ENCODE measurements at regions of chr15 and their contacts with region 1.

Region 1: GRCh38 chr15:48861813-48862431 is 16.0 kb upstream of the EID1 start:
- DNase-seq: peak; percentile 74
- H3K4me3 Mint-ChIP-seq: no peak overlapping the region
- H3K27ac Mint-ChIP-seq: no peak overlapping the region
- H3K4me1 Mint-ChIP-seq: peaks cover 14% of the 10 kb centered on the region
- H3K27me3 Mint-ChIP-seq: peaks cover 11% of the 10 kb centered on the region

Region 2: GRCh38 chr15:48875241-48875960 is 13.5 kb after region 1 on chr15:
- CTCF ChIA-PET with region 1: interaction called, 11 read pairs
- POLR2A ChIA-PET with region 1: no interaction called
- DNase-seq: no peak
- H3K4me3 Mint-ChIP-seq: no peak overlapping the region
- H3K27ac Mint-ChIP-seq: no peak overlapping the region
- H3K4me1 Mint-ChIP-seq: peaks cover 34% of the 10 kb centered on the region
- H3K27me3 Mint-ChIP-seq: peaks cover 36% of the 10 kb centered on the region

Region 3: DNA sequence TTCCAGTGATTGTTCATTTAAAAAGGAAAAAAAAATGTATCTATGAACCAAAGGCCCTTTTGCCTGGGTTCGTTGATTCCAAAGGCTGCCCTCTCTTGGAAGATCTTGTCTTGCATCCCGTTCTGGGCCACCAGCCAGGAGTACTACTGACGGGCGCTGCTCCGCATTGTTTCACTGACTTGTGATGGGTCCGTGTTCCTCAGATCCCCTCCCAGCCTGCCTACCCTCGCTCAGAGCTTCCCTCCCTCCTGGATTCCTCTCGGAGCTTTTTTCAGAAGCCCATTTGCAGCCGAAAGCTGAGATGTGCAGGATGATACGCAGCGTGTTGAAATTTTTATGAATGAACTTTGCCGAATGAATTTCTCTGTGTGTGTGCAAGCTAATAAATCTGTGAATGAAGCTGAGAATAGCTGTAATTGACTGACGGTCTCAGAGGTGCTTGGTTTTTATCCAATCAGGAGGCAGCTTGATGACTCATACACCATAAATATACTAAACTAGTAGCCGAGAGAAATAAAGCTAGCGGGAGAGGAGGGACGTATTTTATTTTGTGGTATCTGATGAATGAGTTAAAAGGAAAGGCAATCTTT is 101.7 kb after region 1 on chr15 and contains the start of gene SHC4:
- CTCF ChIA-PET with region 1: interaction called, 10 read pairs
- POLR2A ChIA-PET with region 1: no interaction called
- DNase-seq: peak; percentile 30
- H3K4me3 Mint-ChIP-seq: peak within 1 kb of the TSS; percentile 63
- H3K27ac Mint-ChIP-seq: peak within 1 kb of the TSS; percentile 48
- H3K4me1 Mint-ChIP-seq: peaks cover 45% of the 10 kb centered on the region
- H3K27me3 Mint-ChIP-seq: peaks cover 43% of the 10 kb centered on the region
- total RNA-seq, gene SHC4: 0.30 to 0.46 TPM

Region 4: GRCh38 chr15:48975472-48976419 is 113.8 kb after region 1 on chr15:
- CTCF ChIA-PET with region 1: interaction called, 27 read pairs
- POLR2A ChIA-PET with region 1: interaction called, 3 read pairs
- DNase-seq: peak; percentile 72
- H3K4me3 Mint-ChIP-seq: peak overlapping the region; percentile 47
- H3K27ac Mint-ChIP-seq: no peak overlapping the region
- H3K4me1 Mint-ChIP-seq: peaks cover 3% of the 10 kb centered on the region
- H3K27me3 Mint-ChIP-seq: peaks cover 7% of the 10 kb centered on the region

Region 5: GRCh38 chr15:49145651-49146609 is 284.0 kb after region 1 on chr15:
- CTCF ChIA-PET with region 1: interaction called, 11 read pairs
- POLR2A ChIA-PET with region 1: no interaction called
- DNase-seq: peak; percentile 58
- H3K4me3 Mint-ChIP-seq: no peak overlapping the region
- H3K27ac Mint-ChIP-seq: no peak overlapping the region
- H3K4me1 Mint-ChIP-seq: peaks cover 31% of the 10 kb centered on the region
- H3K27me3 Mint-ChIP-seq: no peaks in the 10 kb centered on the region

Measured in activated CD4-positive, alpha-beta T cell treated with anti-CD3 and anti-CD28 coated beads, Interleukin-2, amount 10 ng/mL, durations not matched to agents 7 days and 5 days (primary cell).